Adrenal gland (tissue), 19 donors: ENCODE measurements at regions of chr11 and their contacts with region 1.

Region 1: DNA sequence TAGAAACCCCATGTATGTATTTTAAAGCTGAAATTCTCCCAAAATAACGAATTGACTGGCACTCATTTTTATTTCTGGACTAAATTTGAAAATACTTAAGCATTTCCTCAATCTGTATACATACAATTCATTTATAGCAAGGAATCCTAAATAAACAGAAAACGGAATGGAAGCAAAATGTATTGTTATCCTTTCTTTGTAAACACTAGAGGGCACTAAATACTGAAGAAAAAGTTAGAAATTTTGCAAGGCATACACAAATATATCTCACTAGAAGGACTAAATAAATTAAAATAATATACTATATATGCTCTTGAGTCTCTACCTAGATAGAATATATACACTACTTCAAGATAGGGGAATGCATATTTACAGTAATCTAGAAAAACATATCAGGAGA is 23.1 kb upstream of the ANO5 start:
- DNase-seq: no peak
- H3K4me3 ChIP-seq: no peak overlapping the region
- H3K27ac ChIP-seq: no peak overlapping the region
- H3K4me1 ChIP-seq: no peaks in the 10 kb centered on the region
- H3K27me3 ChIP-seq: peaks cover 6% of the 10 kb centered on the region
- CTCF ChIP-seq: peak in 4 of 6 experiments; percentile 24 to 56 (median 53)
- POLR2A ChIP-seq: no peak

Region 2: DNA sequence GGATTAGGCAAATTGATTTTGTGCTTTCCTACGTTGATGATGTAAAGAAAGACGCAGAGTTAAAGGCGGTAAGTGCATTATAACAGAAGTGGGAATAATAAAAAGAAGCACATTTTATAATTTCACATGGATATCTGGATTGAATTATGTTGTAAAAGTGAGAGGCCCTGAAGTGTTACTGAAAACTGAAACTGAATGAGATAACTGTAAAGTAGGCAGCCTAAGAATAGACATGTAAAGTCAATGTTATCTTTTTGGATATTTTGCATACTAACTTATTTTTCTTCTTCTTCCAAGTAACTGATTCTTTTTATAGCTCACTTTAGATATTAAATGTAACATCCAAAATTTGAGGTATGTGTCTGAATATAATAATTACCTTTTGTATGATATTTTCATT is 51.3 kb after region 1 on chr11:
- intact Hi-C with region 1: no loop called
- DNase-seq: no peak
- H3K4me3 ChIP-seq: no peak overlapping the region
- H3K27ac ChIP-seq: no peak overlapping the region
- H3K4me1 ChIP-seq: no peaks in the 10 kb centered on the region
- H3K27me3 ChIP-seq: no peaks in the 10 kb centered on the region
- CTCF ChIP-seq: no peak
- POLR2A ChIP-seq: no peak

Region 3: DNA sequence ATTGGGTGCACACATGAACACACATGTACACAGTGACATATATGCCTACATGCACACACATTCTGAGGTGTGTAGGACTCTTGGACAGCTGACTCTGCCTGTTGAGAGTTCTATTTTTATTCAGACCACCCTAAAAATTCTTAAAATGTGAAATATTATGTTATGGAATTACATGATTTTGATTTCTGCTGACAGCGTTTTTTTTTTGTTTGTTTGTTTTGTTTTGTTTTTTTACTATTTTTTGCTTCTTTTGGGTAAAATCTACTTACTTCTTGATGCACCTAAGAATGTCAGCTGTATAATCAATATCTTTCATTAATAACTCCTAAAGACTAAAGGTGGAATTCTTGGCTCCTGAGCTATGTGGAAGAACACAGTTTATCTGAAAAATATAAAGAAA is 87.0 kb after region 1 on chr11:
- intact Hi-C with region 1: no loop called
- DNase-seq: no peak
- H3K4me3 ChIP-seq: no peak overlapping the region
- H3K27ac ChIP-seq: no peak overlapping the region
- H3K4me1 ChIP-seq: no peaks in the 10 kb centered on the region
- H3K27me3 ChIP-seq: no peaks in the 10 kb centered on the region
- CTCF ChIP-seq: no peak
- POLR2A ChIP-seq: no peak

Region 4: GRCh38 chr11:22304337-22304961 is 134.6 kb after region 1 on chr11:
- intact Hi-C with region 1: loop called in 1 of 2 experiments (anchors 2 kb)
- DNase-seq: no peak
- H3K4me3 ChIP-seq: no peak overlapping the region
- H3K27ac ChIP-seq: no peak overlapping the region
- H3K4me1 ChIP-seq: no peaks in the 10 kb centered on the region
- H3K27me3 ChIP-seq: peaks cover 10% of the 10 kb centered on the region
- CTCF ChIP-seq: peak; percentile 54 to 77 (median 61)
- POLR2A ChIP-seq: no peak